Dorsolateral prefrontal cortex (tissue), 120 donors: ENCODE measurements at regions of chr4 and their contacts with region 1.

Region 1: DNA sequence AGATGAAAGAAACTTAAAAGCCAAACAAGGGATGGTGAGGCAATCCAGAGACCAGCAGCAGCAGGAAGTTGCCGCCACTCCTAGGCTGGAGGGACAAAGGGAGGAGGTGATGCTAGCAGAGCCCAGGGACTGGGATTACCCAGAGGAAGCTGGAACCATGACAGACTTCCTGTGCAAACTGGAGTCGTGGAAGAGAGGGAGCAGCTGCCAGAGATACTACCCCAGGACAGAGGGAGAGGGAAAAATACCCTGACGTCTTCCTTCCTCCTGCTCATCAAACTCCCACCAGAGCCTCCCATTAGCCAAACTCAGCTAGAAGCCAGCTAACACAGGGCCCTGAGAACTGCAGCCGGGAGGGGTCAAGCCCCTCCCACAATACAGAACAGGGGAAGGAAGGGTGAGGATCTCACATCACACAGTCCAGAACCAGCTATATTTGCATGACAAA is 101.2 kb upstream of the KLF3 start:
- DNase-seq: no peak
- H3K4me3 ChIP-seq: no peak overlapping the region
- H3K27ac ChIP-seq: peak overlapping the region in 14 of 59 donors; percentile 3 to 89 (median 24)
- H3K27me3 ChIP-seq: no peaks in the 10 kb centered on the region
- CTCF ChIP-seq: no peak

Region 2: DNA sequence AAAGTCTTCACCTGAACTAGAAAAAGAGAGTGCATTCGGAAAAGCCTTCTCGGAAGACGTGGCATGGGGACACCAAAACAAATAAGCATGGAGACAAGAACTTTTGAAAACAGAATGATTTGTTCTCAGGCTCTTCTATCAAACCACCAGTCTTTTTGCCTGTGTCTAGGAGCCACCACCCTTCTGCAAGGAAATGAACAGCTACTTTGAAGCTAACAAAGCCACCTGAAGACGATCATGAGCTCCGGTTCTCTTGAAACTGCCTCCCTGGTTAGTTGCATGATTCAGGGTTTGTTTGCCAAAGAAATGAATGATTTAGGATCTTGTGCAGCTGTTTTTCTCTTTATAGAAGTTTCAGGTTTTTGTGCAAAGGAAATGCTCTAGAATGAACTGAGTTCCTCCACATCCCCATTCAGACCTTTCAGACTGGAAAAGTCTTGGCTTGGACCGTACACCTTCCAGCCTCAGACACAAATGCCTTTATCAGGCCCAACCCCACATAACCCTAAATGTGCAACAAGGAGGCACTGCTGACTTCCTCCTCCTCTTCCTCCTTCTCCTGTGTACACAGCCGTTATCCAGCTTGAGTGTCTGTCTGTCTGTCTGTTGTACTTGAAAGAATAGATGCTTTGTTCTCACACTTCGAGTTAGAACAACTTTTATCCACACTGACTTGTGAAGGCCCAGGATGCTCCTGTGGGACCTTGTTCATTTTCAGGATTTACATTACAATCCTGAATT is 233.6 kb before region 1 on chr4:
- intact Hi-C with region 1: loop called (anchors 5 to 10 kb)
- DNase-seq: no peak
- H3K4me3 ChIP-seq: no peak overlapping the region
- H3K27ac ChIP-seq: no peak overlapping the region
- H3K27me3 ChIP-seq: no peaks in the 10 kb centered on the region
- CTCF ChIP-seq: no peak

Region 3: DNA sequence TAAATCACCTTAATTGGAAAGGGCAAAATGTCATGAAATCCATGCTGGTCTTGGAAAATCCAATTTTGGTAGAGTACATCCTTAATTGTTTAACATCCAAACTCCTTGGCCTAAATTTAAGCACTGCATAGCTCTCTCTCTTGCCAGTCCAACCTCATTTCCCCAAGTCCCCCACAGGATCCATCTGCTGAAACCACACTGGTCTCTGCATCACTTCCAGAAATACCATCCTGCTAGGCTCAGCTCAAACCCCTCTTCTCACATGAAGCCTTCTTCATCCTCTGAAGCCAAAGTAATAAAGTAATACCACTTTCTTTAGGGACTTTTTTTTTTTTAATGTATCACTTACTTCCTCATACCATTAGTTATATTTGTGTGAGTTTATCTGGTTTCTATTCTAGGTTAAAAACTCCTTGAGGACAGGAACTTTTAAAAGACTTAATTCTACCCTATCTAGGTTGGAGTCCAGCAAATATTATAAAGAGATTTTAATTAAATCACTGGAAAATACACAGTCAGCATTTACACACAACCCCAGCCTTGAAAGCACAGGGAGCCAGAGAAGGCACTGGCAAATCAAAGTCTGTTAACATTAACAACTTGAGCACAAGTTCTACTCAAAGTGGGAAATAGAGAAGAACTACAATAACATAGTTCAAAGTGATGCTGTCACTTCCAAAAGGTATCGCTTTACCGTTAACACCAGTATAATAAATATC is 84.5 kb after region 1 on chr4:
- intact Hi-C with region 1: no loop called
- DNase-seq: no peak
- H3K4me3 ChIP-seq: no peak overlapping the region
- H3K27ac ChIP-seq: no peak overlapping the region
- H3K27me3 ChIP-seq: no peaks in the 10 kb centered on the region
- CTCF ChIP-seq: no peak